Heart right ventricle (tissue), 16 donors: ENCODE measurements at regions of chr6 and their contacts with region 1.

Region 1: DNA sequence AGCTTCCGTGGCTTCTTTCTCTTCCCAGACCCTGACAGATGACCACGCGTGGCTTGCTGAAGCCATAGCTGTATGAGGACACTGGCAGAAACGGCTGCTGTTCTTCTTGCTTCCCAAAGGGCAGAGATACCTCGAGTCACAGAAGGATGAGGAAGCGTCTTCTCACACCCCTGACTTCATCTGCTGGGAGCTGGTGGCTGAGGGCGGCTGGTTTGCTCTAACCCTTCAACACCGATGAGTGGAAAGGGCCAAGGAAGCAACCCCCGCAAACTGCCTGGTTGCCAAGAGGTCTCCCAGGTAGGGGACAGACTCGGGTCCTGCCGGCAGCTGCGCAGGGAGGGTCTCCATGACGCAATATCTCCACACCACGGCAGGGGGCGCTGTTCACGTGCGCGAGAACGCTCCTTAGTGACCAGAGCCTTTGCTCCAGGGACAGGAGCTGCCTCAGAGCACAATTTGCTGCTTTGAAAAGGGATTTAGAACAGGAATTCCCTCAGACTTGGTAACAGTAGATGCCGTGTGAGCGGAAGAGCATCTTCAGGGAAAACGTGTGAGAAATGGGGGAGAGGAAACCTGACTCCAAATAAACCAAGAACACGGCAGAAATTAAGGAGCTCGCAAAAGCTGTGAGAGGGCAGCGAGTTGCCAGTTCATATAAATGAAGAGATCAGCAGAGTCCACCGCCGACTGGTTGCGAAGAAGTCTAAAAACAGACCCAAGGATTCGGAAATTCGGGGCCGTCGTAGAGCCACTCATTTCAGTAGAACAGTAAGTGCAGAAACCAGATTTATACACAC is 80.2 kb downstream of the ERMARD start:
- DNase-seq: peak; percentile 69 to 84
- ATAC-seq: peak; percentile 86 to 96 (median 93)
- H3K4me3 ChIP-seq: no peak overlapping the region
- H3K27ac ChIP-seq: no peak overlapping the region
- H3K4me1 ChIP-seq: peaks cover 0 to 18% (median 12%) of the 10 kb centered on the region in 9 donors
- H3K27me3 ChIP-seq: peaks cover 0 to 35% (median 10%) of the 10 kb centered on the region in 7 donors
- CTCF ChIP-seq: peak; percentile 87 to 98 (median 94)

Region 2: GRCh38 chr6:169959136-169960002 is 127.7 kb after region 1 on chr6:
- intact Hi-C with region 1: loop called in 1 of 10 experiments (anchors 10 kb)
- DNase-seq: peak in 1 of 2 donors; percentile 14
- ATAC-seq: peak in 5 of 8 donors; percentile 30 to 56 (median 49)
- H3K4me3 ChIP-seq: peak overlapping the region in 2 of 10 donors; percentile 8 to 21
- H3K27ac ChIP-seq: no peak overlapping the region
- H3K4me1 ChIP-seq: peaks cover 0 to 29% (median 9%) of the 10 kb centered on the region in 9 donors
- H3K27me3 ChIP-seq: peaks cover 0 to 31% (median 17%) of the 10 kb centered on the region in 7 donors
- CTCF ChIP-seq: no peak

Region 3: GRCh38 chr6:170306324-170307079 is 474.9 kb after region 1 on chr6 and contains the start of gene FAM120B:
- intact Hi-C with region 1: loop called in 1 of 10 experiments (anchors 5 kb)
- DNase-seq: peak; percentile 97 to 98
- ATAC-seq: peak; percentile 98 to 99 (median 99)
- H3K4me3 ChIP-seq: peak within 1 kb of the TSS; percentile 59 to 98 (median 86)
- H3K27ac ChIP-seq: peak within 1 kb of the TSS; percentile 44 to 97 (median 93)
- H3K4me1 ChIP-seq: peaks cover 14 to 56% (median 46%) of the 10 kb centered on the region in 9 donors
- H3K27me3 ChIP-seq: no peaks in the 10 kb centered on the region
- CTCF ChIP-seq: no peak
- total RNA-seq, gene FAM120B: 16.0 to 31.0 (median 25.4) TPM

Region 4: DNA sequence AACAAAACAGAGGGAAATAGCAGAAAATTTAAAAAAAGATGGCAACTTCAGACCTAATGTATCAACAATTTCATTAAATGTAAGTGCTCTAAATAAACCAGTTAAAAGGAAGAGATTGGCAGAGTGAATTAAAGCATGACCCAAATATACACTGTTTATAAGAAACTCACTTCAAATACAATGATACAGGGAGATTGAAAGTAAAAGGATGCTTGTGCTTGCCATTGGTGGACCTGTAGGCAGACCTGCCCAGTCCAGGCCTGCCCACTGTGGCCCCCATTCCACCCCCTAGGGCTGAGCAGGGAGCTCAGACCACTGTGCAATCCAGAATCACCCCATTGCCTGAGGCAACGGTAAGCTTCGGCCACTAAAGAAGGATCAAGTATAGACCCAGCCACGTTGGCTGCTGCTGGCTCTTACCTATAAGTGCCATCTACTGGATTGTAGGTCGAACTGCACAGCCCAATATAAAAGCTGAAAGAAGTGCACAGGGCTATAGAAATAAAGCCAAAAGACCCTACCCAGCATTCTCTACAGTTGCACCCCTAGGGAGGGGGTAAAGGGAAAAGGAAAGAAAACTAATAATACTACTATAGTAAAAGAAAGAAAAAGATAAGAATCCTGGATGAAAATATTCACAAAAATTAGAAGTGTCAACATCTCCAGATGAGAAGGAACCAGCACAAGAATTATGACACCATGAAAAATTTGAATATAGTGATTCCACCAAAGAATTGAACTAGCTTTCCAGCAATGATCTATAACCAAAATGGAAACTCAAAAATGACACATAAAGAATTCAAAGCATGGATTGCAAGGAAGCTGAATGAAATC is 685.4 kb after region 1 on chr6:
- intact Hi-C with region 1: loop called in 3 of 10 experiments (anchors 2 to 10 kb)
- DNase-seq: peak in 1 of 2 donors; percentile 15
- ATAC-seq: peak in 7 of 8 donors; percentile 39 to 81 (median 61)
- H3K4me3 ChIP-seq: no peak overlapping the region
- H3K27ac ChIP-seq: no peak overlapping the region
- H3K4me1 ChIP-seq: peaks cover 0 to 3% (median 1%) of the 10 kb centered on the region in 9 donors
- H3K27me3 ChIP-seq: peaks cover 0 to 4% (median 0%) of the 10 kb centered on the region in 7 donors
- CTCF ChIP-seq: peak; percentile 50 to 82 (median 70)